ENCODE measurements at regions of chr1 and their contacts with region 1.

Region 1: DNA sequence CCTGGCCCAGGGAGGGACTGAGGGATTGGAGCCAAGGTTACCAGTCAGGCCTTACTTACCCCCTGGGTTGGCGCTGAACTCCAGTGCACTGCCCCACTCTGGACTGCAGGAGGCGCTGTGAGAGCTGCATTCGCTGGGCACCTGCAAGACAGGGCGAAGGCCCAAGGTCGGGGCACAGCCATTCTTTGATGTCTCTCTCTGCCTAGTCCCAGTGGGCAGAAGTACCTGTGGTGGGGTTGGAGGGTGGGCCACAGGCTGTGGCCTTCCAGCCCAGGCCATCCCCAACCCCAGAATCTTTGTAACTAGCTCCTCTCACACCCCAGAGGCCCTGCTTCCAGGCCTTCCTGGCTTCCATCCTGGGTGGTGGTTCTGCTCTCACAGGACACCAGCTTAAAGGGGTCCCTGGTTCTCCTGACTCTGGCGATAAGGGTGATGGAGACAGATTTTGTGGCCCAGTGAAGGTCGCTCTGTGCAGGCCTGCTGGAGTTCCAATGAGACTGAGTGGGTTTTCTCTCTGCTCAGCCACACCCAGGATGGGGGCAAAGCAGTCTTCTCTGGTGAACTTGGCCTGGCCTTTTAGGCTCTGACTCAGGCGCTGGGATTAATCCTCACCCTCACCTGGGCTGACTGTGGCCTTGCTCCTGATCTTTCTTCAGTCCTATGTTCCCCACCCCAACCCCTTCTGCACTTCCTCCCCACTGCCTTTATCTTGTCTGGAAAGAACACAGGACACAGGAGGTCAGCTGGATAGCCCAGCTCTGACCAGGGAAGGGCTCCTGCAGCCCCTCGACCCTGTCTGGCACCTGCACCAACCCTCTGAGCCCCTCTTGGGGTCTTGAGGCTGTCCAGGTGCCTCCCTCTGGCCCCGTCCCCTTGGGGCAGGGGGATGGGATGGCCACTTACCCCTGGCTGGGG is 967 bp downstream of the MYOG start:
- DNase-seq: no peak
- H3K4me3 ChIP-seq: no peak overlapping the region
- H3K27ac ChIP-seq: no peak overlapping the region
- H3K4me1 ChIP-seq: peaks cover 5% of the 10 kb centered on the region
- H3K27me3 ChIP-seq: no peaks in the 10 kb centered on the region
- CTCF ChIP-seq: no peak

Region 2: DNA sequence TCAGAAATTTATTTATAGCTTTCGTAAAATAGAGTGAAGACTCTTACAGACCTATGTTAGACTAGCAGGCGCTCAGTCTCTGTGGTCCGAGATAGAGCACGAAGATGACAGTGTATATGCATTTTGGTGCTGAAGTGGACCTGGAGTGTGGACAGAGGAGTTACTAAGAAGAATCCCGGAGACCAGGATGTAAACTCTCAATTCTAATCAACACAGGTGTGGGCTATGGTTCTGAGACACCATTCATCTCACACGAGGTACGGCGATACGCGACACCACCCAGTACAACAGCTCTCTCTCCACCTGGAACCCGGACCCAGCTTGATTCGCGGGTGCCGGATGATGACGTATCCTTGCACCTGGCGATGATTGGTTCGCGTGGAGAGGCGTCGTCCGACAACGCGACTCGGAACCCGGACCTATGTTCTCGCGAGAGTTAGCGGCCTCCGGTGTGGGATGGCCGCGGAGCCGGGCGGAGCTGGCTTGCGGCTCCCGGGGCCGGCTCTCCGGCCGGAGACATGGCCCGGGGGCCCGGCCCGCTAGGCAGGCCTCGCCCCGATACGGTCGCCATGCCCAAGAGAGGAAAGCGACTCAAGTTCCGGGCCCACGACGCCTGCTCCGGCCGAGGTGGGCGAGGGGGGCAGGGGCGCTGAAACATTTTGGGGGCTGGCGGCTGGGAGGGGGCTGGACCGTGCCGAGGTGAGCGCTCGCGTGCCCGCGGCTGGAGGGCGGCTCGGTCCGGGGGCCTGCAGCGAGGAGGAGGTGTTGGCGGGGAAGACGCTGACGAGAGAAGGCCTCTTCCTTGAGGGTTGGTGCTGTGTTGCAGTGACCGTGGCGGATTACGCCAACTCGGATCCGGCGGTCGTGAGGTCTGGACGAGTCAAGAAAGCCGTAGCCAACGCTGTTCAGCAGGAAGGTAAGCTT is 77.6 kb before region 1 on chr1 and contains the start of gene TMEM183A:
- intact Hi-C with region 1: no loop called
- DNase-seq: peak; percentile 95
- H3K4me3 ChIP-seq: peak within 1 kb of the TSS; percentile 95
- H3K27ac ChIP-seq: peak within 1 kb of the TSS; percentile 92
- H3K4me1 ChIP-seq: peaks cover 48% of the 10 kb centered on the region
- H3K27me3 ChIP-seq: no peaks in the 10 kb centered on the region
- CTCF ChIP-seq: no peak
- total RNA-seq, gene TMEM183A: 21.8 TPM

Region 3: GRCh38 chr1:203046984-203047630 is 37.7 kb before region 1 on chr1:
- intact Hi-C with region 1: no loop called
- DNase-seq: no peak
- H3K4me3 ChIP-seq: no peak overlapping the region
- H3K27ac ChIP-seq: no peak overlapping the region
- H3K4me1 ChIP-seq: peaks cover 15% of the 10 kb centered on the region
- H3K27me3 ChIP-seq: no peaks in the 10 kb centered on the region
- CTCF ChIP-seq: no peak

Region 4: GRCh38 chr1:203448521-203449061 is 363.7 kb after region 1 on chr1:
- intact Hi-C with region 1: loop called (anchors 5 kb)
- DNase-seq: peak; percentile 37
- H3K4me3 ChIP-seq: no peak overlapping the region
- H3K27ac ChIP-seq: peak overlapping the region; percentile 73
- H3K4me1 ChIP-seq: peaks cover 14% of the 10 kb centered on the region
- H3K27me3 ChIP-seq: peaks cover 32% of the 10 kb centered on the region
- CTCF ChIP-seq: no peak